Upper lobe of right lung (tissue), 1 donor: ENCODE measurements at regions of chr1 and their contacts with region 1.

Region 1: GRCh38 chr1:237390823-237391222 is 348.8 kb downstream of the RYR2 start:
- DNase-seq: no peak
- ATAC-seq: no peak
- H3K4me3 ChIP-seq: no peak overlapping the region
- H3K27ac ChIP-seq: no peak overlapping the region
- H3K4me1 ChIP-seq: peaks cover 5% of the 10 kb centered on the region
- H3K27me3 ChIP-seq: peaks cover 4% of the 10 kb centered on the region
- CTCF ChIP-seq: no peak

Region 2: GRCh38 chr1:237032029-237032428 is 358.8 kb before region 1 on chr1:
- intact Hi-C with region 1: loop called (anchors 10 kb)
- DNase-seq: no peak
- ATAC-seq: peak; percentile 67
- H3K4me3 ChIP-seq: no peak overlapping the region
- H3K27ac ChIP-seq: peak overlapping the region; percentile 31
- H3K4me1 ChIP-seq: peaks cover 11% of the 10 kb centered on the region
- H3K27me3 ChIP-seq: no peaks in the 10 kb centered on the region
- CTCF ChIP-seq: no peak

Region 3: DNA sequence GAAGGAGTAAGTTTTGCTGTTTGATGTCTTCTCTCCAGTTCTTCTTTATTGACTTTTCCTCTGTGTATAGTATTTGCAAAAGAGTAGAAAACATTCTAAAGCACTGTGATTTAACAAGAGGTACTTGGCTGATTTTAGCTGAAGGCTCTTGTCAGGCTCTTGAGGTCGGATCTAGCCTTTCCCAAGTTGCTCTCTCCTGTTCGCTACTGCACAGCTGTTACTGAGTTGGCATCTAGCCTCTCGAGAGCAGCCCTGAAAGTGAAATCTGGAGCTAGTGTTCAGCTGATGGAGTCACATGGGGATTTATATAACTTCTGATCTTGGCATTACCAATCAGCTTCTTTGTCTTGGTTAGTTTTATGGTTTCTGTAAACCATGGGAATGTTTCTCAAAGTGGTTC is 155.7 kb before region 1 on chr1:
- intact Hi-C with region 1: no loop called
- DNase-seq: no peak
- ATAC-seq: peak; percentile 95
- H3K4me3 ChIP-seq: no peak overlapping the region
- H3K27ac ChIP-seq: no peak overlapping the region
- H3K4me1 ChIP-seq: peaks cover 4% of the 10 kb centered on the region
- H3K27me3 ChIP-seq: no peaks in the 10 kb centered on the region
- CTCF ChIP-seq: no peak

Region 4: GRCh38 chr1:237539055-237539454 is 148.2 kb after region 1 on chr1:
- intact Hi-C with region 1: no loop called
- DNase-seq: no peak
- ATAC-seq: no peak
- H3K4me3 ChIP-seq: no peak overlapping the region
- H3K27ac ChIP-seq: no peak overlapping the region
- H3K4me1 ChIP-seq: no peaks in the 10 kb centered on the region
- H3K27me3 ChIP-seq: no peaks in the 10 kb centered on the region
- CTCF ChIP-seq: no peak